HepG2 (cell line): ENCODE measurements at regions of chr1 and their contacts with region 1.

Region 1: GRCh38 chr1:68120136-68120791 is 69.8 kb upstream of the DIRAS3 start:
- DNase-seq: peak; percentile 60
- ATAC-seq: peak; percentile 78
- H3K4me3 ChIP-seq: no peak overlapping the region
- H3K27ac ChIP-seq: no peak overlapping the region
- H3K4me1 ChIP-seq: peaks cover 8% of the 10 kb centered on the region
- H3K27me3 ChIP-seq: peaks cover 0 to 7% of the 10 kb centered on the region in 2 experiments; a peak in 3 of 5 replicates
- CTCF ChIP-seq: peak; percentile 86
- EP300 ChIP-seq: no peak
- POLR2A ChIP-seq: no peak
- RAD21 ChIP-seq: peak; percentile 66

Region 2: DNA sequence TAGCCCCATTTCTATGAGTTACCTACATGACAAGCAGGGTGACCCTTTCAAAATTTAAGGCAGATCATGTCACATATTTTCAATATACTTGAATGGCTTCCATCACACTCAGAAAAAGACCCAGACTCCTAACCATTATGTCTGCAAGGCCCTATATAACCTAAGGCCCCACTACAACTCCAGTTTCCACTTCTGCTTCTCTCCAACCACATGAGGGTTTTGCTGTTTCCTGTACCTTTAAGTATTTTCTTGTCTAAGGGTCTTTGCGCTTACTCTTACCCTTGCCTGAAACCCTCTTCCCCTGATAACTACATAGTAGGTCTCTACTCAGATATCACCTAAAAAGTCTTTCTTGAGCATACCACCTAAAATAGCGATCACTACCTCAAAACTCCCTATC is 1540.2 kb before region 1 on chr1:
- CTCF ChIA-PET with region 1: no interaction called
- POLR2A ChIA-PET with region 1: no interaction called
- in situ Hi-C with region 1: no loop called
- intact Hi-C with region 1: no loop called
- DNase-seq: no peak
- ATAC-seq: no peak
- H3K4me3 ChIP-seq: no peak overlapping the region
- H3K27ac ChIP-seq: no peak overlapping the region
- H3K4me1 ChIP-seq: peaks cover 20% of the 10 kb centered on the region
- H3K27me3 ChIP-seq: no peaks in the 10 kb centered on the region; a peak in 1 of 5 replicates
- CTCF ChIP-seq: no peak
- EP300 ChIP-seq: no peak
- POLR2A ChIP-seq: no peak
- RAD21 ChIP-seq: no peak

Region 3: GRCh38 chr1:68321084-68321685 is 200.9 kb after region 1 on chr1:
- CTCF ChIA-PET with region 1: interaction called, 33 read pairs
- POLR2A ChIA-PET with region 1: interaction called, 5 read pairs
- in situ Hi-C with region 1: loop called (anchors 5 kb)
- intact Hi-C with region 1: loop called (anchors 1 kb)
- DNase-seq: peak; percentile 50
- ATAC-seq: peak; percentile 100
- H3K4me3 ChIP-seq: no peak overlapping the region
- H3K27ac ChIP-seq: no peak overlapping the region
- H3K4me1 ChIP-seq: no peaks in the 10 kb centered on the region
- H3K27me3 ChIP-seq: 0 out of 5 replicates have a peak, but pooled peaks cover 0 to 3% of the 10 kb centered on the region in 2 experiments
- CTCF ChIP-seq: peak; percentile 80
- EP300 ChIP-seq: no peak
- POLR2A ChIP-seq: no peak
- RAD21 ChIP-seq: peak; percentile 70

Region 4: DNA sequence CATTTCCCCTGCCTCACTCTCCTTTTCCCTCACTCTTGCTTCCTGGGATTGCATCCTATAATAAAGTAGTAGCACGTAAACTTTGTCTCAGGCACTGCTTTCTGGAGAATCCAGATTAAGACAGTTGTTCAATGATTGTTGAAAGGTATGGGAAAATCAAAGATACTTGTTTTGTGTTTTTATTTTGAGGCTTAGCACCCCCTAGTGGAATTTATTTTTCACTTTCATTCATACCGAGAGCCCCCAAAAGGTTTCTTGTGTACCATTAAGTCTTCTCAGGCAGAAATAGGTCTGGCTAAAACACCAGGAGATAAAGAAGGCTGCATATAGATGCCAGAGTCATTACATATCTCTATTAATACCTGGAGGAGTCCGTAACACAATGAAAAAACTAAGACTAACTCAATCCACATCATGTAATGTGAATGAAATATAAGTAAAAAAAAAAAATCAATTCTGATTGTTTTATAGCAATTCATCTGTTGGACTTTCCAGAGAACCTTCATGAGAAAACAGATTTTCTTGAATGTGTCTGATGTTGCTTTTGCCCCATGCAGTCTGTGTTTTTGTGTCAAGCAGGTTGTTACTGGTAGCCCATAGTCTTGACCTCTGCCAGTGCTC is 226.0 kb after region 1 on chr1:
- CTCF ChIA-PET with region 1: interaction called, 17 read pairs
- POLR2A ChIA-PET with region 1: no interaction called
- in situ Hi-C with region 1: loop called (anchors 5 kb)
- intact Hi-C with region 1: loop called (anchors 1 kb)
- DNase-seq: peak; percentile 4
- ATAC-seq: peak; percentile 25; the same call in 1 of the 3 replicates
- H3K4me3 ChIP-seq: no peak overlapping the region
- H3K27ac ChIP-seq: no peak overlapping the region
- H3K4me1 ChIP-seq: no peaks in the 10 kb centered on the region
- H3K27me3 ChIP-seq: no peaks in the 10 kb centered on the region
- CTCF ChIP-seq: no peak
- EP300 ChIP-seq: no peak
- POLR2A ChIP-seq: no peak
- RAD21 ChIP-seq: no peak

Region 5: GRCh38 chr1:68442822-68443556 is 322.7 kb after region 1 on chr1:
- CTCF ChIA-PET with region 1: no interaction called
- POLR2A ChIA-PET with region 1: no interaction called
- in situ Hi-C with region 1: no loop called
- intact Hi-C with region 1: loop called (anchors 5 kb)
- DNase-seq: peak; percentile 21
- ATAC-seq: peak; percentile 75
- H3K4me3 ChIP-seq: no peak overlapping the region
- H3K27ac ChIP-seq: no peak overlapping the region
- H3K4me1 ChIP-seq: no peaks in the 10 kb centered on the region
- H3K27me3 ChIP-seq: no peaks in the 10 kb centered on the region
- CTCF ChIP-seq: peak; percentile 39
- EP300 ChIP-seq: no peak
- POLR2A ChIP-seq: no peak
- RAD21 ChIP-seq: no peak